ENCODE measurements at regions of chr16 and their contacts with region 1.

Region 1: DNA sequence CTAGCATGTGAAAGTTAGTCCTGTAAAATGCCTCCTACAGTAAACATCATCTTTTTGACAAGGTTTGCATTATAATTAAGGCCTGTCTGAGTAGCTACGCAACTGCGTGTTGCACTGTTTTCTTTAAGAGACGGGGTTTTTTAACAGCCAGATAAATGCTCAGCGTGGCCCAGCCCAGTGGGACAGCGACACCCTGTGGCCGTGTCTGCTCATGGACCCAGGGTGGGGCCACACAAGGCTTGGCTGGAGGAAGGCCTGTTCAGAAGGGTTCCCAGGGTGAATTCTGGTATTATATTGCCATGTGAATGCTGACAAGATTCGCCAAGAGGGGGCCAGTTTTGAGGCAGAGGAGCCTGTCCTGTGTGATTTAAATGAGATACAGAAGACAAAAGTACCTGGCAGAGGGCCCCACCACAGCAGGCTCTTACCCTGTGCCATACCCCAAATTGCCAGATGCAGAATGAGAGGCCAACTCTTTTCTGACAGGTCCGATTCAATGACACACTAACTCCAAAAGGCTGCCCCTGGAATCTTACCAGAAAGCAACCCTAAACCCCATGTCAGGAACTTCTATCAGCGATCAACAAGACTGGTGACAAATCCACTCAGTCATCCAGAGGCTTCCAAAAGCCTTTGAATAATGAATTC is 65.9 kb upstream of the IRX6 start:
- DNase-seq: peak; percentile 60 to 83
- H3K4me3 ChIP-seq: no peak overlapping the region
- H3K4me1 ChIP-seq: no peaks in the 10 kb centered on the region
- H3K27me3 ChIP-seq: no peaks in the 10 kb centered on the region

Region 2: GRCh38 chr16:53945996-53946395 is 1312.1 kb before region 1 on chr16:
- in situ Hi-C with region 1: loop called (anchors 25 kb)
- DNase-seq: peak; percentile 37 to 50
- H3K4me3 ChIP-seq: no peak overlapping the region
- H3K4me1 ChIP-seq: no peaks in the 10 kb centered on the region
- H3K27me3 ChIP-seq: no peaks in the 10 kb centered on the region; the same call in 1 of the 2 replicates

Measured in HAP-1 (cell line).